GM10248 (cell line): ENCODE measurements at regions of chr19 and their contacts with region 1.

Region 1: GRCh38 chr19:18000935-18001778 is 6.8 kb upstream of the ARRDC2 start:
- DNase-seq: peak; percentile 89
- CTCF ChIP-seq: no peak

Region 2: DNA sequence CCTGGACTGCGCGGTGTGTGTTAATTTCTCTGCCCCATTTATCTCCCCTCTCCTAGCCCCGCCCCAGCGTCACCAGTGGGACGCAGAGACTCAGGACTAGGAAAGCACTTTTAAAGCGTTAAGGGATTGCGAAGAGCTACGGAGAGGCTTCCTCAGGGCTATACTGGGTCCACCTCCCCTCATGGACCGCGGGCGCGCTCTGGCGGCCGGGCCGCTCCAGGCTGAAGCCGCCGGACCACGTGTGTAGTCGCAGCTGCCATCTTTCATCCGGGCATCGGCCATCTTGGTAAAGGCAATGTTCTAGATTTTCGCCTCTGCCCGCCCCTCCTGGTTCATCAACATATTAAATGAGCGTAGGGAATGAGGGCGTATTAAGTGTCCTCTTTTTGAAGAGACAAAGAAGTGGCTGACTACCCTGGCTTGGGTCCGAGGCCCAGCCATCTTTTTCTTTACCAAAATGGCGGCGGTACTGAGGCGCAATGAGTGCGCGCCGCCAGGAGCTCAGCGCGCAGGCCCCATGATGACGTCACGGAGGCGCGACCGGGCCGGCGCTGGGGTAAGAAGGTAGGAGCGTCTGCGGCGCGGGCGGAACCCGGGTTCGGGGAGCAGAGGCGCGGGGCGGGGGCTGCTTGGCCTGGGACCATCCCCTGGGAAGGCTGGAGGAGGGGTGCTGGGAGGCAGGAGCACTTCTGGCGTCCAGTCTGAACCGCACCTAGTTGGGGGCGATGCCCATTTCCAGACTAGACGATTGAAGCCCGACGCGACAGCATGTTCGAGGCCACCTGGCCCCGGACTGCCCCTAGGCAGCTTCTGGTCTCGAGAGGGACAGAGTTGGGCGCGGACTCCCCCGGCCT is 68.4 kb before region 1 on chr19 and contains the start of gene CCDC124:
- CTCF ChIA-PET with region 1: interaction called, 295 read pairs
- POLR2A ChIA-PET with region 1: no interaction called
- DNase-seq: peak; percentile 93
- CTCF ChIP-seq: peak; percentile 99

Region 3: GRCh38 chr19:17947815-17948513 is 53.2 kb before region 1 on chr19:
- CTCF ChIA-PET with region 1: interaction called, 110 read pairs
- POLR2A ChIA-PET with region 1: no interaction called
- DNase-seq: peak; percentile 99
- CTCF ChIP-seq: no peak

Region 4: DNA sequence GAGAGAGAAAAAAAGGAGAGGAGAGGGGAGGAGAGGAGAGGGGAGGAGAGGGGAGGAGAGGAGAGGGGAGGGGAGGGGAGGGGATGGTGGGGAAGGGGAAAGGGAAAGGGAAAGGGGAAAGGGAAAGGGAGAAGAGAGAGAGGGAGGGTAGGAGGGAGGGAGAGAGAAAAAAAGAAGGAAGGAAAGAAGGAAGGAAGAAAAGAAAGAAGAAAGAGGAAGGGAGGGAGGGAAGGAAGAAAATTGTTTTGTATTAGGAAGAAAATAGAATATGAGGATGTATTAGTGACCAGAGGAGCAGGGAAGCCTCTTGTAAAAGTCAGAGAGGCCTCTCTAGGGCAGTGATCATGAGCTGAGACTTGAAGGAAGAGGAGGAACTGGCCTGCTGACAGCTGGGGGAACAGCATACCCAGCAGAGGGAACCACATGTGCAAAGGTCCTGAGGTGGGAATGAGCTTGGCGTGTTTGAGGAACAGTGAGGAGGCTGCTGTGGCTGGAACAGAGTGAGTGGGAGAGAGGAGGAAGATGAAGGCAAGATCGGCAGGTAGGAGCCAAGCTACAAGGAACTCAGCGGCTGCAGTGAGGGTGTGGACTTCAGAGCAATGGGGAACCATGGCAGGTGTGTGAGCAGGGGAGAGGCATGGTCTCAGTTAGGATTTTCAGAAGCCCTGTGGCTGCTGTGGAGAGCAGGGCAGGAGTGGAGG is 43.9 kb before region 1 on chr19:
- CTCF ChIA-PET with region 1: interaction called, 35 read pairs
- POLR2A ChIA-PET with region 1: no interaction called
- DNase-seq: no peak
- CTCF ChIP-seq: no peak

Region 5: DNA sequence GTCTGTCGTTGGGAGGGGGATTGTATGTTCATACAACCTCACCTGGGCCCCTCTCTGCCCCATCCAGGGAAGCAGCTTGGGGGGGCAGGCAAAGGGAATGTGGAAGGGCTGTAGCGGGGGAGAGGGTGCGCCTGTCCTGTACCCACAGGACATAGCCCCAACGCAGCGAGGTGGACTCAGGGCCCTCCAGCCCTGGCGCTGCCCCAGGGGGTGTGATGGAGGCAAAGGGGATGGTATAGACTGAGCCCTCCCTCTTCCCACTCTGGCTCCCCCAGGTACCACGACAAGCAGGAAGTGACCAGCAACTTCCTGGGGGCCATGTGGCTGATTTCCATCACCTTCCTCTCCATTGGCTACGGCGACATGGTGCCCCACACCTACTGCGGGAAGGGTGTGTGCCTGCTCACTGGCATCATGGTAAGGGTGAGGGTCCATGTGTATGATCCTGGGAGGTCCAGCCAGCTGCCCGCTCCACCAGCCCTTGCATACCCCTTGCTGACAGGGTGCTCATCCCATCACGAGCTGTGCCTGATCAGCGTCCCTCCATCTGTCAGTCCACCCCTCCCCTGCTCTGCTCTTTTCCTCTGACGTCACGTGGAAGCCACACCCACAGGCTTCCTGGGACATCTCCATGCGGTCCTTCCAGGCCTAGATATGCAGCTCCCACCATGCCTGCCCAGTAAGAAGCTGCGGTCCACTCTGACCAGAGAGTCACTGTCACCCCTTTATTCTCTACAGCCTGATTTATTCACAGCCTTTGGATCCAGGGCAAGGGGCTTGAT is 15.9 kb before region 1 on chr19:
- CTCF ChIA-PET with region 1: interaction called, 23 read pairs
- POLR2A ChIA-PET with region 1: no interaction called
- DNase-seq: no peak
- CTCF ChIP-seq: no peak

Region 6: DNA sequence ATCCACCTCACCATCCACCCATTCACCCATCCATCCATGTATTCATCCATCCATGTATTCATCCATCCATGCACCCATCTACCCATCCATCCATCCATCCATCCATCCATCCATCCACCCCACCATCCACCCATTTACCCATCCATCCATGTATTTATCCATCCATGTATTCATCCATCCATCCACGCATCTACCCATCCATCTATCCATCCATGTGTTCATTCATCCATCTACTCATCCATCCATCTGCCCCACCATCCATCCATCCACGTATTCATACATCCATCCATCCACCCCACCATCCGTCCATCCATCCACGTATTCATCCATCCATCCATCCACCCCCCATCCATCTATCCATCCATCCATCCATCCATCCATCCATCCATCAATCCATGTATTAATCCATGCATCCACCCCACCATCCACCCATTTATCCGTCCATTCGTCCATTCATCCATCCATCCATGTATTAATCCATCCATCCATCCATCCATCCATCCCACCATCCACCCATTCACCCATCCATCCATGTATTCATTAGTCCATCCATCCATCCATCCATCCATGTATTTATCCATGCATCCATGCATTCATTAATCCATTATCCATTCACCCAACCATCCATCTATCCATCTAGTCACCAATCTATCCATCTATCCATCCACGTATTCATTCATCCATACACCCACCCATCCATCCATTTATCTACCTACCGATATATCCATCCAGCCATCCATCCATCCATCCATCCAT is 83.0 kb after region 1 on chr19:
- CTCF ChIA-PET with region 1: no interaction called
- POLR2A ChIA-PET with region 1: no interaction called
- DNase-seq: no peak
- CTCF ChIP-seq: no peak

Region 7: GRCh38 chr19:18098891-18099622 is 97.9 kb after region 1 on chr19:
- CTCF ChIA-PET with region 1: no interaction called
- POLR2A ChIA-PET with region 1: no interaction called
- DNase-seq: peak; percentile 84
- CTCF ChIP-seq: no peak

Region 8: DNA sequence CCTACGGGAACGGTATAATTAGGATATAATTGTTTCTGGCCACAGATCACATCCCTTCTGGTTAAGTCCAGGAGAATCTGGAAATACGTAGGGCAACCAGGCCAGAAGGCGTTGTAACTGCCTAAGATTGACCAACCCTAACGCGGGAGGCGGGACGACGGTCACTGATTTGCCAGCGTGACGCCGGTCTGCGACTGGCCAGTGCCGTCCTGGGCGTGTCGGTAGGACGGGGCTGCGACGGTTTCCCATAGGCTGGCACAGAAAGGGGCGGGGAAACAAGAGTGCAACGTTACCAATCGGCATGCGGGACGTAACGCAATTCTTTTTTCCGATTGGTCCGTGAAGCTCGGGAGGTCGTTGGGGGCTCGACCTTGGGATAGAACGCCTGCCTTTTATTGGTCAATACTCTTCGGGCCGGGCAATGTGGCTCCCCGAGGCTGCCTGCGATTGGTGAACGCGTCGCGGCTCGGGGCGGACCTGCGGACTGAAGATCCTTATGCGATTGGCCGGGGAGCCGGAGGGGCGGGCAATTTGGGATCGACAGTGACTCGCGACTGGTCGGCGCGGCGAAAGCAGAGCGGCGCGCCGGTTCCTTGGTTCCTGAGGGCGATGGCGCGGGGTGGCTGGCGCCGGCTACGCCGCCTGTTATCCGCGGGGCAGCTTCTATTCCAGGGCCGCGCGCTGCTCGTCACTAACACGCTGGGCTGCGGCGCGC is 191.7 kb after region 1 on chr19 and contains the start of gene MPV17L2:
- CTCF ChIA-PET with region 1: no interaction called
- POLR2A ChIA-PET with region 1: no interaction called
- DNase-seq: peak; percentile 95
- CTCF ChIP-seq: no peak